ENCODE measurements at regions of chr16 and their contacts with region 1.

Region 1: GRCh38 chr16:50245417-50246298 is 20.7 kb upstream of the ADCY7 start:
- DNase-seq: peak; percentile 65
- ATAC-seq: peak; percentile 89
- H3K4me3 Mint-ChIP-seq: peak overlapping the region; percentile 77
- H3K27ac Mint-ChIP-seq: no peak overlapping the region
- H3K4me1 Mint-ChIP-seq: peaks cover 5% of the 10 kb centered on the region
- H3K27me3 Mint-ChIP-seq: peaks cover 3% of the 10 kb centered on the region
- CTCF ChIP-seq: no peak

Region 2: GRCh38 chr16:50235581-50235980 is 10.1 kb before region 1 on chr16:
- CTCF ChIA-PET with region 1: no interaction called
- POLR2A ChIA-PET with region 1: no interaction called
- intact Hi-C with region 1: loop called (anchors 2 kb)
- DNase-seq: no peak
- ATAC-seq: no peak
- H3K4me3 Mint-ChIP-seq: no peak overlapping the region
- H3K27ac Mint-ChIP-seq: no peak overlapping the region
- H3K4me1 Mint-ChIP-seq: no peaks in the 10 kb centered on the region
- H3K27me3 Mint-ChIP-seq: no peaks in the 10 kb centered on the region
- CTCF ChIP-seq: no peak

Region 3: DNA sequence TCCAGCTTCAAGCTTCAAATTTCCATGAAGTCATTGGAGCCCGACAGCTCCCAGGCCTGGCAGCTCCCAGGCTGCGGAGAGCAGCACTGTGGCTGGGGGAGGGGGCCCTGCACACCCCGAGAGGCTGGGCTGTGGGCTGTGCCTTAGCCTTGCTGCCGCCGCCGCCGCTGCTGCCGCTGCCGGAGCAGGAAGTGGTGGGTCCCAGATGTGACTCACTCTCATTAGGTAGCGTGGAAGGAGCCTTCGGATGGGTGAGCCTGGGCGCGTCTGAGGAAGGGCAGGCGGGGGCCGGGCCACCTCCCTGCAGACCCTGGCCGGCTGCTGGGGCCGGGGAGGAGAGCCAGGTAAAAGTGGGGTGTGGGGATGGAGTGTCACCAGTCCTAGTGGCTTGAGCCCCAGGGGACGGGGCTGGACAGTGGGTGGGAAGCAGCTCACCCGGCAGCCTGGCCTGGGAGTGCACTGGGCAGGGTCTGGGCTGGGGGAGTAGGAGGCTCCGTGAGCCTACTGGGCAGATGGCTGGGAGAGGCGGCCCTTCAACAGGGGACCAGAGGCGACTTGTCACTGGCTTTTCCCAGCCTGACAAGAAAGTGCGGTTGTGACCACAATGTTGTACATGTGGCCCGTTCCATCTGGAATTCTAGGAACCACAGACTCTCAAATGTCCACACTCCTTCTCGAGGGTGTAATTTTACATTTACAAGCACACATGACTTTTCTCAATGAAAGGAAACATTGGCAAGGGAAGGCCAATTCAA is 20.9 kb after region 1 on chr16 and contains the start of gene ADCY7:
- CTCF ChIA-PET with region 1: no interaction called
- POLR2A ChIA-PET with region 1: no interaction called
- intact Hi-C with region 1: loop called (anchors 1 kb)
- DNase-seq: peak; percentile 61
- ATAC-seq: peak; percentile 93
- H3K4me3 Mint-ChIP-seq: peak within 1 kb of the TSS; percentile 84
- H3K27ac Mint-ChIP-seq: peak within 1 kb of the TSS; percentile 90
- H3K4me1 Mint-ChIP-seq: peaks cover 70% of the 10 kb centered on the region
- H3K27me3 Mint-ChIP-seq: no peaks in the 10 kb centered on the region
- CTCF ChIP-seq: no peak
- total RNA-seq, gene ADCY7: 109 and 128 TPM in 2 replicates

Region 4: DNA sequence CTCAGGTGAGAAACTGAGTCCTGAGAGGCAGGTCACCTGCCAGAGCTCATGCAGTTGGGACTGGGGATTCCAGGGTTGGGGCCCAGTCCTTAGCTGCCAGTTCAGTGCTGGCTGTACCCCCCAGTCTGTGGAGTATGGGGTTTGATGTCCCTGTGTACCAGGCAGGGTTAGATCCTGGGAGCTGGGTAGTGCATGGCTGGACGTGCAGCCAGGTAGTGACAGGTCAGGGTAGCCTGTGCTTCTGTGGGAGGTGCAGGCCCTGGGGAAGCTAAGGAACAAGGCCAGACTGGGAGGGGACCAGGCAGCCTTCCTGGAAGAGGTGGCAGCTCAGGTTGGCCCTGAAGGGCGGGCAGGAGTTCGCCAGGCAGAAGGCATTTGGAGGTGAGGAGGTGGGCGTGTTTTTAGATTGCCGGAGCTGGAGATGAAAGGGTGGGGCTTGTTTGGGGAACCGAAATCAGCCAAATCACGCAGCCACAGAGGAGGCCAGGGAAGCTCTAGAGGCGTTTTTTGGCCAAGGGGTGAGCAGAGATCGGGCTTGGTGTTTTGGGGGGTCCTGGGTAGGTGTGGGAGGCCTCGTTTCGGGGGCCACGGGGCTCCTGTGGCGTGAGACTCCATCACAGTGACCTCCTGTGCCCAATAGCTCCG is 28.1 kb after region 1 on chr16:
- CTCF ChIA-PET with region 1: interaction called, 19 read pairs
- POLR2A ChIA-PET with region 1: interaction called, 18 read pairs
- intact Hi-C with region 1: no loop called
- DNase-seq: no peak
- ATAC-seq: peak; percentile 82
- H3K4me3 Mint-ChIP-seq: peak overlapping the region; percentile 99
- H3K27ac Mint-ChIP-seq: peak overlapping the region; percentile 100
- H3K4me1 Mint-ChIP-seq: peaks cover 92% of the 10 kb centered on the region
- H3K27me3 Mint-ChIP-seq: no peaks in the 10 kb centered on the region
- CTCF ChIP-seq: no peak

Region 5: DNA sequence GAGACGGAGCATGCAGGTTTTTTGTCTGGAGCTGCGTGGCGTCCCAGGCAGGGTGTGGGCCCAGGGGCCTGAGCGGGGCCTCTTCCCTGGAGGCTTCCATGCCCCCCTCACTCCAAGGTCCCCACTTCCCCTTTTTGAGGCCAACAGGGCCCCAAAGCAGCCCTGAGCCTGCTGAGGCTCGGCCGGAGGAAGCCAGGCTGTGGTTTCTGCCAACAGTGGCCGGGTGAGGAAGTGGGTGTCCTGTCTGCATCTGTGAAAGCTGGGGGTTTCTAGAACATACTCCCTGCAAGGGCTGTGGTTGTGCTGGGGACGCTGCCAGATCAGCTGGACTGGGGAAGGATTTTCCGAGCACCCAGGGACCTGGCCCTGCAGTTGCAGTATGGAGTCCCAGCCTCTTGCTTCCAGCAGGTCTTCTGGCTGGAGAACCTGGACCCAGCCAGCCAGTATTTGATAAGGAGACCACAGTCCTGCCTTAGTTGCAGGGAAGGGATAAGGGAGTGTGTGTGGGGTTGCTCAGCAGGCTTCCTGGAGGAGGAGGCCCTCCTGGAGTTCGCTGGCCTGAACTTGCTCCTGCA is 36.4 kb after region 1 on chr16:
- CTCF ChIA-PET with region 1: interaction called, 5 read pairs
- POLR2A ChIA-PET with region 1: interaction called, 4 read pairs
- intact Hi-C with region 1: loop called (anchors 1 kb)
- DNase-seq: peak; percentile 74
- ATAC-seq: peak; percentile 86
- H3K4me3 Mint-ChIP-seq: peak overlapping the region; percentile 69
- H3K27ac Mint-ChIP-seq: peak overlapping the region; percentile 100
- H3K4me1 Mint-ChIP-seq: peaks cover 90% of the 10 kb centered on the region
- H3K27me3 Mint-ChIP-seq: no peaks in the 10 kb centered on the region
- CTCF ChIP-seq: no peak

Region 6: GRCh38 chr16:50368410-50369132 is 122.9 kb after region 1 on chr16 and contains the start of gene BRD7:
- CTCF ChIA-PET with region 1: no interaction called
- POLR2A ChIA-PET with region 1: no interaction called
- intact Hi-C with region 1: loop called (anchors 1 kb)
- DNase-seq: peak; percentile 79
- ATAC-seq: peak; percentile 89
- H3K4me3 Mint-ChIP-seq: peak within 1 kb of the TSS; percentile 92
- H3K27ac Mint-ChIP-seq: peak within 1 kb of the TSS; percentile 90
- H3K4me1 Mint-ChIP-seq: peaks cover 47% of the 10 kb centered on the region
- H3K27me3 Mint-ChIP-seq: peaks cover 4% of the 10 kb centered on the region
- CTCF ChIP-seq: no peak
- total RNA-seq, gene BRD7: 60.3 and 65.2 TPM in 2 replicates

Region 7: GRCh38 chr16:50381679-50382440 is 136.2 kb after region 1 on chr16:
- CTCF ChIA-PET with region 1: no interaction called
- POLR2A ChIA-PET with region 1: no interaction called
- intact Hi-C with region 1: no loop called
- DNase-seq: no peak
- ATAC-seq: no peak
- H3K4me3 Mint-ChIP-seq: no peak overlapping the region
- H3K27ac Mint-ChIP-seq: no peak overlapping the region
- H3K4me1 Mint-ChIP-seq: no peaks in the 10 kb centered on the region
- H3K27me3 Mint-ChIP-seq: peaks cover 2% of the 10 kb centered on the region
- CTCF ChIP-seq: no peak